ENCODE measurements at regions of chr16 and their contacts with region 1.

Region 1: DNA sequence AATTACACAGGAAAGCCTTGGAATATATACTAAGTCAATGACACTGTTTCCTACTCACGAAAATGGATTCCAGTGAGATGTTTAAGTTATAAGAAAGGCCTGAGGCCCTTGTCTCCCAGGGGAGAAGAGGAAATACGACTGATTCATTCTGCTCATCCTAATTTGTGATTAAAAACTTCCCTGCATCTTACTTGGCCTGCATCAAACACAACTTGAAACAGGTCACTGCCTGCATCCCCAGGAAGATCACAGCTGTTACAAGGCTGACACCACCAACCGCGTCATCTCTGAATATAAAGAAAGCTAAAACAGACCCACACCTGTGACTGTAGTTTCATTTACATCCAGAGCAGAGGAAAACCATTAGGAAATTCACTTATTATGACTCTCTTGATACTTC is 121.9 kb downstream of the DNAH3 start:
- DNase-seq: no peak
- ATAC-seq: no peak
- H3K4me3 ChIP-seq: no peak overlapping the region
- H3K27ac ChIP-seq: no peak overlapping the region
- H3K4me1 ChIP-seq: no peaks in the 10 kb centered on the region
- H3K27me3 ChIP-seq: no peaks in the 10 kb centered on the region
- CTCF ChIP-seq: no peak
- EP300 ChIP-seq: no peak
- POLR2A ChIP-seq: no peak
- RAD21 ChIP-seq: no peak

Region 2: GRCh38 chr16:21075252-21075651 is 46.5 kb after region 1 on chr16:
- CTCF ChIA-PET with region 1: interaction called, 3 read pairs
- POLR2A ChIA-PET with region 1: no interaction called
- RAD21 ChIA-PET with region 1: no interaction called
- SMC1A ChIA-PET with region 1: no interaction called
- in situ Hi-C with region 1: loop called (anchors 5 kb)
- intact Hi-C with region 1: no loop called
- DNase-seq: no peak
- ATAC-seq: no peak
- H3K4me3 ChIP-seq: no peak overlapping the region
- H3K27ac ChIP-seq: no peak overlapping the region
- H3K4me1 ChIP-seq: no peaks in the 10 kb centered on the region
- H3K27me3 ChIP-seq: no peaks in the 10 kb centered on the region
- CTCF ChIP-seq: no peak
- EP300 ChIP-seq: no peak
- POLR2A ChIP-seq: no peak
- RAD21 ChIP-seq: no peak

Region 3: GRCh38 chr16:21150375-21151001 is 121.8 kb after region 1 on chr16 and contains the start of gene DNAH3:
- CTCF ChIA-PET with region 1: no interaction called
- POLR2A ChIA-PET with region 1: no interaction called
- RAD21 ChIA-PET with region 1: no interaction called
- SMC1A ChIA-PET with region 1: no interaction called
- in situ Hi-C with region 1: no loop called
- intact Hi-C with region 1: no loop called
- DNase-seq: no peak
- ATAC-seq: no peak
- H3K4me3 ChIP-seq: no peak within 1 kb of the TSS
- H3K27ac ChIP-seq: no peak within 1 kb of the TSS
- H3K4me1 ChIP-seq: no peaks in the 10 kb centered on the region
- H3K27me3 ChIP-seq: peaks cover 0 to 3% of the 10 kb centered on the region in 2 experiments; a peak in 3 of 4 replicates
- CTCF ChIP-seq: no peak
- EP300 ChIP-seq: no peak
- POLR2A ChIP-seq: no peak
- RAD21 ChIP-seq: no peak
- polyA plus RNA-seq, gene DNAH3: under 0.01 TPM in 1 of 2 experiments, not detected in the other

Measured in GM12878 (cell line).